Activated B cell treated with CpG ODN at 0.5 μM for 24 hours (primary cell): ENCODE measurements at regions of chr7 and their contacts with region 1.

Region 1: GRCh38 chr7:112449902-112450806 is at the start of gene IFRD1:
- DNase-seq: peak; percentile 99
- ATAC-seq: peak; percentile 81
- H3K4me3 Mint-ChIP-seq: peak within 1 kb of the TSS; percentile 99
- H3K27ac Mint-ChIP-seq: peak within 1 kb of the TSS; percentile 99
- H3K4me1 Mint-ChIP-seq: peaks cover 36% of the 10 kb centered on the region
- H3K27me3 Mint-ChIP-seq: no peaks in the 10 kb centered on the region
- CTCF ChIP-seq: no peak
- total RNA-seq, gene IFRD1: 58.7 and 67.0 TPM in 2 replicates

Region 2: DNA sequence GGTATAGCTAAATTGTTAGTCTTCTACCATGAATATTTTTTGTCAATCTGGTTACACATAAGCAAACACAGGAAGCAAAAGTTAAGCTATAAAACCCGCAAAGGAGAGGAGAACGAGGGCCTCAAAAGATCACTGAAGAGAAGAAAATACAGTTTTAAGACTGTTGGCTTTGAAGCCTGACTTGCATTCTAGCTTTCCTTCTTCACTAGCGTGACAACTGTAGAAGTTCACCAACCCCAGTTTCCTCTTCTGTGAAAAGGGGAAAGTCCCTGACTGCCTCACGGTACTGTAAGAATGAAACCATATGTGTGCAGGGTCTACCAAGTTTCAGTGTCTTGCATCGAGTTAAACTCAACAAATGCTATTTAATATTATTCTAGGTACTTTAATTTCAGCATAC is 1366.7 kb before region 1 on chr7:
- CTCF ChIA-PET with region 1: no interaction called
- POLR2A ChIA-PET with region 1: no interaction called
- intact Hi-C with region 1: loop called (anchors 2 kb)
- DNase-seq: no peak
- ATAC-seq: peak; percentile 96
- H3K4me3 Mint-ChIP-seq: peak overlapping the region; percentile 59
- H3K27ac Mint-ChIP-seq: peak overlapping the region; percentile 90
- H3K4me1 Mint-ChIP-seq: peaks cover 48% of the 10 kb centered on the region
- H3K27me3 Mint-ChIP-seq: no peaks in the 10 kb centered on the region
- CTCF ChIP-seq: no peak

Region 3: DNA sequence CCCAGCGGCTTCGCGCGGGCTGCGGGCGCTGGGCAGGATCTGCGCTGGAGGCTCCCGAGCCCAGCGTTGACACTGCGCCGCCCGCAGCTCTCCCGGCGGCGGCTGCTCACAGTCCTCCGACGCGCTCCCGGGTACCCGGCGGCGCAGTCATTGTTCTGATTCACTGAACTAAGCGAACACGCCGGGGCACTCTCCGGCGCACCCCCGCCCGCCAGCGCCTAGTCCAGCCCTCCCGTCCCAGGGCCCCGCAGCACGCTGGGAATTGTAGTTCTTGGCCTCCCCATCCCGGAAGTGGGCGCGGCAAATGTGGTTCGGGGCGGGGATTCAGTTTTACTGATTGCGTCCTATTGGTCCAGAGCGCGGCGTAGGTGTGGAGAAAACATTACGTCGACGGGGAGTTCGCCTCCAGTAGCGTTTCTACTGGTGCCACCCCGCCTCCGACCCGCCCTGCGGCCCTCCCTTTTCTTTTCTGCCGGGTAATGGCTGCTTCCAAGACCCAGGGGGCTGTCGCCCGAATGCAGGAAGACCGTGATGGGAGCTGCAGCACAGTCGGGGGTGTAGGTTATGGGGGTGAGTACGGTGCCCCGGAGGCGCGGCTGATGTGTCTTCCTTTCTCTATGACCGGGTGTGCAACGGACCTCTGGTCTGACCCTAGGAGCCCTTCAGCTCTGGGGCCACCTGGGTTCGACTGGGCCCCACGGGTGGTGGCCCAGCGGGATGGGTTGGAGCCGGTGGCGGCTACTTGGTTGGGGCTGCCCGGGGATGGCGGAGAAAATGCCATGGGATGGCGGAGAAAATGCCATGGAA is 243.7 kb before region 1 on chr7 and contains the starts of genes DOCK4 and ZNF277:
- CTCF ChIA-PET with region 1: no interaction called
- POLR2A ChIA-PET with region 1: interaction called, 17 read pairs
- intact Hi-C with region 1: loop called (anchors 1 kb)
- DNase-seq: peak; percentile 99
- ATAC-seq: peak; percentile 90
- H3K4me3 Mint-ChIP-seq: peak within 1 kb of the TSS; percentile 97
- H3K27ac Mint-ChIP-seq: peak within 1 kb of the TSS; percentile 83
- H3K4me1 Mint-ChIP-seq: peaks cover 37% of the 10 kb centered on the region
- H3K27me3 Mint-ChIP-seq: peaks cover 25% of the 10 kb centered on the region
- CTCF ChIP-seq: no peak
- total RNA-seq, gene DOCK4: 0.61 and 0.73 TPM in 2 replicates
- total RNA-seq, gene ZNF277: 12.6 and 13.1 TPM in 2 replicates

Region 4: GRCh38 chr7:112437043-112437442 is 13.1 kb before region 1 on chr7:
- CTCF ChIA-PET with region 1: no interaction called
- POLR2A ChIA-PET with region 1: no interaction called
- intact Hi-C with region 1: no loop called
- DNase-seq: no peak
- ATAC-seq: no peak
- H3K4me3 Mint-ChIP-seq: no peak overlapping the region
- H3K27ac Mint-ChIP-seq: no peak overlapping the region
- H3K4me1 Mint-ChIP-seq: no peaks in the 10 kb centered on the region
- H3K27me3 Mint-ChIP-seq: no peaks in the 10 kb centered on the region
- CTCF ChIP-seq: no peak

Region 5: DNA sequence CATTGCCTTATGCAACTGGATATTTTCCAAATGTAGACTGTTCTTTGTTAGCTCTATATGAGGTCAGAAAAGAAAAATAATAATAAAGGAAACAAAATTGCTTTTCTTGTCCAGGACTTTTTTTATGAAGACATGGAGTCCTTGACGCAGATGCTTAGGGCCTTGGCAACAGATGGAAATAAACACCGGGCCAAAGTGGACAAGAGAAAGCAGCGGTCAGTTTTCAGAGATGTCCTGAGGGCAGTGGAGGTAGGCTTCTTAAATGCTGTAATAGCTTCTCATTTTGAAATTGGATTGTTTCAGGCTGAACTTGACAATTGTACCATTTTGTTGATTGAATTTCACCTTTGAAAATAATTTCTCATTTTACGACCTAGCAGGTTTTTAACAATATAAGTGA is 17.7 kb after region 1 on chr7:
- CTCF ChIA-PET with region 1: interaction called, 4 read pairs
- POLR2A ChIA-PET with region 1: no interaction called
- intact Hi-C with region 1: loop called (anchors 2 kb)
- DNase-seq: no peak
- ATAC-seq: no peak
- H3K4me3 Mint-ChIP-seq: no peak overlapping the region
- H3K27ac Mint-ChIP-seq: no peak overlapping the region
- H3K4me1 Mint-ChIP-seq: no peaks in the 10 kb centered on the region
- H3K27me3 Mint-ChIP-seq: no peaks in the 10 kb centered on the region
- CTCF ChIP-seq: no peak

Region 6: GRCh38 chr7:113118074-113118959 is 668.2 kb after region 1 on chr7 and contains the start of gene SMIM30:
- CTCF ChIA-PET with region 1: no interaction called
- POLR2A ChIA-PET with region 1: interaction called, 8 read pairs
- intact Hi-C with region 1: loop called (anchors 1 kb)
- DNase-seq: peak; percentile 77
- ATAC-seq: peak; percentile 100
- H3K4me3 Mint-ChIP-seq: peak within 1 kb of the TSS; percentile 93
- H3K27ac Mint-ChIP-seq: peak within 1 kb of the TSS; percentile 97
- H3K4me1 Mint-ChIP-seq: peaks cover 23% of the 10 kb centered on the region
- H3K27me3 Mint-ChIP-seq: no peaks in the 10 kb centered on the region
- CTCF ChIP-seq: no peak
- total RNA-seq, gene SMIM30: 28.7 and 30.6 TPM in 2 replicates